ENCODE measurements at regions of chr9 and their contacts with region 1.

Region 1: DNA sequence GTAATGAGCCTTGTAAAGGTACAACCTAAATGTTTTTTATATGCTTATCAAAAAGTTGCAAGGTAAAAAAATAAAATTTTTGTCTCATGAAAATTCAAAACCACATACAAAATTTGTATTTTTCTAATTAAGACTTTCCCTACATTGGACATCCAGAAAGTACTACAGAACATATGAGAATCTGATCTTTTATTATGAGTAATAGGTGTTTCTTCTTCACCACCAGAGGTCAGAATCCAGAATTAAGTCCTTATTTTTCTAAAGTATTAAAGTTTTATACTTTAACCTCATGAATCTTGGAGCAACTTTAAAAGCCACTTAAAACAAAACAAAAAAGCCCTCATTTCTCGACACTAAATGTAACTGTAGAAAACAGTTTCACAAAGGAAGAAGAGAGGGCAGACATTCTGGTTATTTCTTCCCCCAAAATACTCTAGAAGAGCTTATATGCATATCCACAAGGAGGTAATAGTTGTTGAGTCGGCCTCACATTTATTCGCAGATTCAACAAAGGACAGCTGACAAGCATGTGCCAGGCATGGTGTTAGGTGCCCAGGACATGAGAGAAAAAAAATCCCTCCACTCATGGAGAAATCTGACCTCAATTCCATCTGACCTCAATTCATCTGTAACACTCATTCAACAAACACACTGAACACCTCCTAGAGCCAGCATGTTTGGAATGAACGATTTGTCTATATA is 69.3 kb downstream of the MLLT3 start:
- DNase-seq: no peak
- H3K4me3 ChIP-seq: no peak overlapping the region
- H3K27ac ChIP-seq: peak overlapping the region; percentile 13
- H3K4me1 ChIP-seq: peaks cover 37% of the 10 kb centered on the region
- H3K27me3 ChIP-seq: no peaks in the 10 kb centered on the region
- CTCF ChIP-seq: no peak

Region 2: DNA sequence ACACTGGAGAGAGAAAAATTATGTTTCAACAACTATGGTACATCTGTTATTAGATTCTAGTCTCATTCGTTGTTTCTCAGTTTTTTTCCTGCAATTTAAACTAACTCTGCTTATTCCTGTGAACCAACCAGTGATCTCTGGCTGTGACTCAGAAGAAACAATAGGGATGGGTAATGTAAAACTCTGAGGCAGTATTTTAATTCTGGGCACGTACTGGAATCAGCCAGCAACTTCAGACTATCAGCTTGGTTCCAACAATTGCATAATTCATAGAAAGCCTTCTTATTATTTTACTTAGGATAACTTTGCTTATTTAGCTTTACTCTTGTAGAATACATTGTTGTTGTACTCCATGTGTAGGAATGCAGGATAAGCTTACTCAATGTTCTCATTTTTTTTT is 40.5 kb after region 1 on chr9:
- dilution Hi-C with region 1: no loop called
- DNase-seq: no peak
- H3K4me3 ChIP-seq: no peak overlapping the region
- H3K27ac ChIP-seq: no peak overlapping the region
- H3K4me1 ChIP-seq: peaks cover 17% of the 10 kb centered on the region
- H3K27me3 ChIP-seq: no peaks in the 10 kb centered on the region
- CTCF ChIP-seq: no peak

Region 3: GRCh38 chr9:20604562-20604961 is 51.5 kb after region 1 on chr9:
- dilution Hi-C with region 1: loop called (anchors 10 kb)
- DNase-seq: no peak
- H3K4me3 ChIP-seq: no peak overlapping the region
- H3K27ac ChIP-seq: no peak overlapping the region
- H3K4me1 ChIP-seq: no peaks in the 10 kb centered on the region
- H3K27me3 ChIP-seq: no peaks in the 10 kb centered on the region
- CTCF ChIP-seq: no peak

Region 4: DNA sequence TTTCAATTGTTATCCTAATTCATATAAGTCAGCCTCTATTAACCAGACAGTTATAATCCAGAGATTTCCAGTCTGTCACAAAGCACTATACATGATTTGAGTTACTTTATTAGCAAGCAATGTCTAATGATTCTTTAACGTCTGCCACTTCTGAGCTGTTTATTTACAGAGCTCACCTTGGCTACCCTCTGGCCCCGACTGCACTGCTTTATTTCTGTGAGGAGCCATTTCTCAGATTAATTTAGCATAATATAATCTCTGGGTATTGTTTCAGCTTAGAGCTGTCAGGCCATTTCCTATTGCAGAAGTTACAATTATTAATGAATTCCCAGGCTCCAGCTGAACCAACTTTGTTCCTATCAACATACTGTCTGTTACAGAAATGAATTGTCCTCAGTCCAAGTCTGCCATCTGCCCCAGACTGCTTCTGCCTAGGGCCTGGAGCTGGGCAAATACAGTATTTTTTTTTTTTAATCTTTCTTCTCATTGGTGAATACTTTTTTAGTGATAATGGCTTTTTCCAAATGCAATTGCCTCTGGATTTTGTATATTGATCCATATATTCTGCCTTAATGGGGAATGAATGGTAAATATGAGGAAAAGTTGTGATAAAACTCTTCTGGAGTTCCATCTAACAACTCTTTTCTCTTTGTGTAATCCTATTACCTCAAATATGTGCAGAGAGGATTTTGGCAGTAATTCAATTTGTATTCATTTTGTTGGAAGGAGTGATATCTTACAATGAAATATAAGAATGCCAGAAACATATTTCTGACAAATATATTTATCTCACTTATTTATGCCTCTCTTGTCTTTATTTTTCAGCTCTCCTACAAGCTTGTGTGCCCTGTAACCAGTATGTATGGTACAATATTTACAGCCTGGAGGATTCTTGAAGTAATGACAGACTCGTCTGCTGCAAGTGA is 235.8 kb after region 1 on chr9:
- dilution Hi-C with region 1: no loop called
- DNase-seq: no peak
- H3K4me3 ChIP-seq: no peak overlapping the region
- H3K27ac ChIP-seq: no peak overlapping the region
- H3K4me1 ChIP-seq: peaks cover 5% of the 10 kb centered on the region
- H3K27me3 ChIP-seq: no peaks in the 10 kb centered on the region
- CTCF ChIP-seq: no peak